ENCODE measurements at regions of chr12 and their contacts with region 1.

Region 1: DNA sequence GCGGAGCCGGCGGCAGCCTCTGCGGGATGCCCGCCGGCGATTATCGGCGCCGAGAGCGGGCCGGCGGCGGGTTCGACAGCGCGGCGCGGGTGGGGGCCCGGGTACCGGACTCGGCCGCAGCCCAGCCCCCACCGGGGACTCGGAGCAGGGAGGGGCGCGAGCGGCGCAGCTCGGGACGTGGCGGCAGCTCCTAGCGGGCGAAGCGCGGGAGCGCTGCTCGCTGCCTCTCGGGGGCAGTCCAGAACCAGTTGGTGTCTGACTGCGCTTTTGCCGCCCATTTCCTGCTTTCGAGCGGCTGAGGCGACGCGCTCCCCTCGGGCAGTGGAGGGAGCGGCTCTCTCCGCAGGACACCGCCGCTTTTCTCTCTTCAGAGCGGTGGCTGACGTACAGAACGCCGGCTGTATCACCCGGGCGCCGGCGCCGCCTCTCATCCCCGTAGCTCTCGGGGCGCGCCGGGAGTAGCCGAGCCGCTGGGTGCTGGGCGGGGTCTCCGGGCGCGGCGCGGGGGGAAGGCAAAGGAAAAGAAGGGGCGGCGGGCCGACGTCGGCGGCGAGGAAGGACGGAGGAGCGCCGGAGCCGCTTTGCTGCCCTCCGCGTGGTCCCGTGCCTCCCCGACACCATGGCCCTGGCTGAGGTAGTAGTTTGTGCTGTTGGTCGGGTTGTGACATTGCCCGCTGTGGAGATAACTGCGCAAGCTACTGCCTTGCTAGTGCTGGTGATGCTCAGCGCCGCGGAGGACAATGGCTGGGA is 136.6 kb downstream of the MON2 start:
- DNase-seq: peak; percentile 87
- ATAC-seq: peak; percentile 78
- H3K4me3 Mint-ChIP-seq: peak overlapping the region; percentile 77
- H3K27ac Mint-ChIP-seq: peak overlapping the region; percentile 97
- H3K4me1 Mint-ChIP-seq: peaks cover 35% of the 10 kb centered on the region
- H3K27me3 Mint-ChIP-seq: no peaks in the 10 kb centered on the region

Region 2: DNA sequence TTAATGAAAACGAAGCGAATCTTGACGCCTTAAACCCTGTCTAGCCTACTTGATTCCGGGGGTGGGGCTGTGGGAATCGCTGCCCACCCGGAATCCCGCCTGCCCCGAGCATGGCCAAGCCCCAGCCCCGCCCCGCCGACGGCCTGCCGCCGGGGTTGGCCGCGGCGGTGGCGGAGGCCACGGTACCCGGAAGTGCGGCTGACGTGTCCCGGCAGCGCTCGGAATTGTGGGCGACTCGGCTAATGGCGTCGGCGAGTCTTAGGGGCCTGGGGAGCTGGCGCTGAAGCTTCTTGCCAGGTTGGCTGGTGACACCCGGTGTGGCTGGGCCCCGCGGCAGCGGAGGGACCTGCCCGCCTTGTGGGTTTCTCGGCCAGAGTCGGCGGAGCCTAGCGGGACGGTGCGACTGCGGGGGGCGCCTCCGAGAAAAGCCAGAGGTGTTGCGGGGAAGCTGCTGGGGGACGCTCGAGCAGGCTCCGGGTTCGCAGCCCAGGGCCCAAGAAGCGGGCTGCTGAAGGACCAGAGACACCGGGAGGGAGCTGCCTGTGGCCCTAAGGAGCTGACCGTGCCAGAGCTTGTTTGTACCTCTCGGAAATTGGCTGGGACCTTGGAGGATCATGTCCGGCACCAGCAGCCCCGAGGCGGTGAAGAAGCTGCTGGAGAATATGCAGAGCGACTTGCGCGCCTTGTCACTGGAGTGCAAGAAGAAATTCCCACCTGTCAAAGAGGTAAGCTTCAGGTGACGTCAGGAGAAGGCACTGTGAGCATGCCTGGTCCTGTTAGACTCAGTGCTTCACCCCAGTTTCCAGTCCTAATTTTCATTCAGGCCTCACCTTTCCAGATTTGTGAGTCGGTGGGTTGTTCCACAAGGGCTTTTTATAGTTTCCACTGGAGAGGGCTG is 136.4 kb before region 1 on chr12 and contains the start of gene MON2:
- CTCF ChIA-PET with region 1: interaction called, 4 read pairs
- POLR2A ChIA-PET with region 1: interaction called, 4 read pairs
- intact Hi-C with region 1: loop called (anchors 1 to 2 kb)
- DNase-seq: peak; percentile 92
- ATAC-seq: peak; percentile 97
- H3K4me3 Mint-ChIP-seq: peak within 1 kb of the TSS; percentile 92
- H3K27ac Mint-ChIP-seq: peak within 1 kb of the TSS; percentile 93
- H3K4me1 Mint-ChIP-seq: peaks cover 20% of the 10 kb centered on the region
- H3K27me3 Mint-ChIP-seq: peaks cover 4% of the 10 kb centered on the region
- total RNA-seq, gene MON2: 26.9 to 31.3 TPM

Region 3: GRCh38 chr12:62640910-62641448 is 37.7 kb after region 1 on chr12:
- CTCF ChIA-PET with region 1: interaction called, 9 read pairs
- POLR2A ChIA-PET with region 1: interaction called, 10 read pairs
- intact Hi-C with region 1: loop called (anchors 1 kb)
- DNase-seq: peak; percentile 68
- ATAC-seq: peak; percentile 99
- H3K4me3 Mint-ChIP-seq: peak overlapping the region; percentile 53
- H3K27ac Mint-ChIP-seq: peak overlapping the region; percentile 39
- H3K4me1 Mint-ChIP-seq: peaks cover 17% of the 10 kb centered on the region
- H3K27me3 Mint-ChIP-seq: peaks cover 6% of the 10 kb centered on the region

Region 4: DNA sequence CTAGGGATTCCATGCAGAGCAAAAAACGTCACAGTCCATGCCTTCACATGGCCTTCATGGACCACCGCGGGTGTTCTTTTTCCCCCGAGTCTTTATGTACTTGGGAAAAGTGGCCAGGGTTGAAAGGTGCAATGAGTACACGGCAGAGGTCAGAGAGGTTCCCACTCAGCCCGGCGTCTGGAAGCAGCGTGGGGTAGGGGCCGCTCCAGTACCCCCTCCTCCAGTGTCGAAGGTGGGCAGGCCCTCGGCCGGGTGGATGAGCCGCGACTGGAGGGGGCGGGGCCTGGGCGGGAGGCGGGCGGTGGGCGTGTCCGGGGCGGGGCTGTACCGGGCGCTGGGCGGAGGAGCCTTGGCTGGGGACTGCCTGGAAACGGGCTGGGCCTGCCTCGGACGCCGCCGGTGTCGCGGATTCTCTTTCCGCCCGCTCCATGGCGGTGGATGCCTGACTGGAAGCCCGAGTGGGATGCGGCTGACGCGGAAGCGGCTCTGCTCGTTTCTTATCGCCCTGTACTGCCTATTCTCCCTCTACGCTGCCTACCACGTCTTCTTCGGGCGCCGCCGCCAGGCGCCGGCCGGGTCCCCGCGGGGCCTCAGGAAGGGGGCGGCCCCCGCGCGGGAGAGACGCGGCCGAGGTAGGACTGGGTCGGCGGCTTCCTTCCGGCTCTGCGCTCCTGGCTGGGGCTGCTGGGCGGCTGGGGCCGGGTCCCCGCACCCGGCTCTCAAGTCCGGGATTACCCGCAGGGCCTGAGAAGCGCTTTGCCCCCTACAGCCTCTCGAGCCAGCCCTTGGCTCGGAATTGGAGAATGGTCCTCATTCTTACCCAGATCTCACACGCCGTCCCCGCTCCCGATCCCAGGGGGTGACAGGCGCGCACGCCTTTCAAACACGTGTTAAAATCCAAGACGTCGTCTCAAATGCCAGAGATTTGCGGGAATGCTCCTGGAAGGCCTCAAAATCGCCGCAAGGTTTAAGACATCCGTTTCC is 1176.6 kb after region 1 on chr12 and contains the start of gene RXYLT1:
- CTCF ChIA-PET with region 1: no interaction called
- POLR2A ChIA-PET with region 1: no interaction called
- intact Hi-C with region 1: loop called in 1 of 2 experiments (anchors 2 kb)
- DNase-seq: peak; percentile 92
- ATAC-seq: peak; percentile 94
- H3K4me3 Mint-ChIP-seq: peak within 1 kb of the TSS; percentile 94
- H3K27ac Mint-ChIP-seq: peak within 1 kb of the TSS; percentile 95
- H3K4me1 Mint-ChIP-seq: peaks cover 10% of the 10 kb centered on the region
- H3K27me3 Mint-ChIP-seq: no peaks in the 10 kb centered on the region
- total RNA-seq, gene RXYLT1: 14.8 to 15.6 TPM

Measured in activated CD4-positive, alpha-beta T cell treated with anti-CD3 and anti-CD28 coated beads for 36 hours (primary cell).